CD14-positive monocyte (primary cell): ENCODE measurements at regions of chr1 and their contacts with region 1.

Region 1: DNA sequence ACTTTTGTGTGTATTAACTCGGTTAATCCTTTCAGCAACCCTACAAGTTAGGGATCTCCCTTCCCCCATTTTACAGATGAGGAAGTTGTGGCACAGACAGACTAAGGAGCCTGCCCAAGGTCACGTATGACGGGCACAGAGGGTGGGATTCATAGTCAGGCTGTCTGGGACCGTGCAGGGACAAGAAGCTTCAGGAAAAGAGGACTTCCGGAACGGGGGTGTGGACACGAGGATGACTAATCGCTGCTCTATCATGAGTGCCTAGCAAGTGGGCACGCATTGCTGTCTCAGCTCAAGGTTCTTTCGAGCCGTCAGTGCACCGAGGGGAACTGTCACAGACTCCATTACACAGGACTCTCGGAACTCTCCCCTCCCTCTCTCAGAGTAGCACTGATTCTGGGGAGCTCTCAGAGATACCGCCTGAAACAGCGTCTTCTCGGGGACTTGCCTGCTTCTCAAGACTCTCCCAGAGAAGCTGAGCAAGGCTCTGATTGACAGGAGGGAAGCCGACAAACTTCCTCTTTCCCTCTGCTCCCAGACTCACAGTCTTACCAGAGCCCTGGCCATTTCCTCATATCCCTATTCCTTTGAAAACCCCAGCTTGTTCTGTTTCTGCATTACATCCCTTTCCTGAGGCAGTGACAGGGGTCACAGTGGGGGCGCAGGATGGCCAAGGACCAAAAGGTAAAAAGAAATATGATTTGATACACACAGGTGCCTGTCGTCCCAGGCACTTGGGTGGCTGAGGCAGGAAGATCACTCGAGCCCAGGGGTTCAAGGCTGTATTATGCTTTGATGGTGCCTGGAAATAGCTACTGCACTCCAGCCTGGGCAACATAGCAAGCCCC is 14.4 kb downstream of the FHAD1 start:
- DNase-seq: peak; percentile 98 to 100 (median 100)
- H3K4me3 ChIP-seq: peak overlapping the region; percentile 17 to 64 (median 35)
- H3K4me3 Mint-ChIP-seq: peak overlapping the region; percentile 62 to 84
- H3K27ac ChIP-seq: peak overlapping the region; percentile 95
- H3K27ac Mint-ChIP-seq: peak overlapping the region; percentile 88 to 99 (median 98)
- H3K4me1 ChIP-seq: peaks cover 55 to 56% of the 10 kb centered on the region in 2 donors
- H3K4me1 Mint-ChIP-seq: peaks cover 59% of the 10 kb centered on the region
- H3K27me3 ChIP-seq: no peaks in the 10 kb centered on the region
- H3K27me3 Mint-ChIP-seq: peaks cover 0 to 2% (median 1%) of the 10 kb centered on the region in 3 donors
- CTCF ChIP-seq: no peak

Region 2: GRCh38 chr1:14954210-14954609 is 307.2 kb before region 1 on chr1:
- intact Hi-C with region 1: no loop called
- DNase-seq: no peak
- H3K4me3 ChIP-seq: no peak overlapping the region
- H3K4me3 Mint-ChIP-seq: no peak overlapping the region
- H3K27ac ChIP-seq: no peak overlapping the region
- H3K27ac Mint-ChIP-seq: no peak overlapping the region
- H3K4me1 ChIP-seq: no peaks in the 10 kb centered on the region
- H3K4me1 Mint-ChIP-seq: no peaks in the 10 kb centered on the region
- H3K27me3 ChIP-seq: no peaks in the 10 kb centered on the region
- H3K27me3 Mint-ChIP-seq: peaks cover 0 to 2% (median 0%) of the 10 kb centered on the region in 3 donors
- CTCF ChIP-seq: no peak

Region 3: GRCh38 chr1:15151377-15151806 is 110.0 kb before region 1 on chr1:
- intact Hi-C with region 1: no loop called
- DNase-seq: no peak
- H3K4me3 ChIP-seq: no peak overlapping the region
- H3K4me3 Mint-ChIP-seq: no peak overlapping the region
- H3K27ac ChIP-seq: no peak overlapping the region
- H3K27ac Mint-ChIP-seq: no peak overlapping the region
- H3K4me1 ChIP-seq: peaks cover 43 to 46% of the 10 kb centered on the region in 2 donors
- H3K4me1 Mint-ChIP-seq: peaks cover 40% of the 10 kb centered on the region
- H3K27me3 ChIP-seq: peaks cover 15 to 16% of the 10 kb centered on the region in 2 donors
- H3K27me3 Mint-ChIP-seq: peaks cover 44 to 51% (median 51%) of the 10 kb centered on the region in 3 donors
- CTCF ChIP-seq: no peak

Region 4: DNA sequence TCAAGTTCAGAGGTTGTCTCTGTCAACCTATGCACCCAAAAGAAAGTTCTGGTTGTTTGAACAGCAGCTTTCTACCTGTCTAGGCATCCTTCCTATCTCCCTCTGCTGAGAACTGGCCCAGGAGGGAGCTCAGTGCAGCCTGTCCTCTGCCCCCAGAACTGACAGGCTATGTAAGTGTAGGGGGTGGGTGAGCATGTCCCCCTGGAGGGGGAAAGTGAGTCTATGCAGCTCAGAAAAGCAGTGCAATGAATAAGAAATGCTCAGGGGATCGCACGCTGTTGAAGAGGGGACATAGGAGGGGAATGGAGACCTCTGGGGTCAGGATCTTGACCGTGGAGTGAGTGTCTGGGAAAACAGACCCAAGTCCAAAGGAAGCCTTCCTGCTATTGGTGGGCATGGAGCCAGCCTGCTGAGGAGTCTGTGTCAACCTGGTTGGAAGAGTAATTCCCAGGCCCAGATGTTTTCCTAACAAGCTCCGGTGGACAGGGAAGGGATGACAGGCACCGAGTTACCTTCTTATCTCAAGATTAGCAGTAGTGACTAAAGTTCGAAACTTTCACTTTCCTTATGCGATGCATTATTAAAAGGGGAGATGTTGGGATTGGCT is 40.5 kb before region 1 on chr1:
- intact Hi-C with region 1: loop called (anchors 2 to 5 kb)
- DNase-seq: no peak
- H3K4me3 ChIP-seq: no peak overlapping the region
- H3K4me3 Mint-ChIP-seq: no peak overlapping the region
- H3K27ac ChIP-seq: no peak overlapping the region
- H3K27ac Mint-ChIP-seq: peak overlapping the region in 4 of 7 donors; percentile 16 to 69 (median 54)
- H3K4me1 ChIP-seq: peaks cover 31 to 33% of the 10 kb centered on the region in 2 donors
- H3K4me1 Mint-ChIP-seq: peaks cover 39% of the 10 kb centered on the region
- H3K27me3 ChIP-seq: no peaks in the 10 kb centered on the region
- H3K27me3 Mint-ChIP-seq: peaks cover 0 to 9% (median 3%) of the 10 kb centered on the region in 3 donors
- CTCF ChIP-seq: no peak

Region 5: GRCh38 chr1:15246960-15247614 is 14.3 kb before region 1 on chr1 and contains the start of gene FHAD1:
- intact Hi-C with region 1: loop called (anchors 1 to 2 kb)
- DNase-seq: peak; percentile 41 to 64 (median 58)
- H3K4me3 ChIP-seq: peak within 1 kb of the TSS; percentile 15 to 57 (median 36)
- H3K4me3 Mint-ChIP-seq: peak within 1 kb of the TSS; percentile 65 to 85
- H3K27ac ChIP-seq: peak within 1 kb of the TSS; percentile 70 to 81
- H3K27ac Mint-ChIP-seq: peak within 1 kb of the TSS; percentile 81 to 94 (median 88)
- H3K4me1 ChIP-seq: peaks cover 36 to 46% of the 10 kb centered on the region in 2 donors
- H3K4me1 Mint-ChIP-seq: peaks cover 49% of the 10 kb centered on the region
- H3K27me3 ChIP-seq: peaks cover 3 to 5% of the 10 kb centered on the region in 2 donors
- H3K27me3 Mint-ChIP-seq: peaks cover 15 to 33% (median 20%) of the 10 kb centered on the region in 3 donors
- CTCF ChIP-seq: no peak
- polyA plus RNA-seq, gene FHAD1: 0.67 to 0.69 TPM in 2 of 3 donors, not detected in the other